Naive thymus-derived CD4-positive, alpha-beta T cell (primary cell): ENCODE measurements at regions of chr3 and their contacts with region 1.

Region 1: GRCh38 chr3:18531662-18532236 is 106.6 kb upstream of the SATB1 start:
- DNase-seq: no peak
- ATAC-seq: no peak
- H3K4me3 ChIP-seq: no peak overlapping the region
- H3K4me3 Mint-ChIP-seq: no peak overlapping the region
- H3K27ac ChIP-seq: no peak overlapping the region
- H3K27ac Mint-ChIP-seq: peak overlapping the region in 2 of 9 donors; percentile 22 to 37
- H3K4me1 ChIP-seq: no peaks in the 10 kb centered on the region
- H3K4me1 Mint-ChIP-seq: peaks cover 0 to 19% (median 8%) of the 10 kb centered on the region in 7 donors
- H3K27me3 ChIP-seq: no peaks in the 10 kb centered on the region
- H3K27me3 Mint-ChIP-seq: no peaks in the 10 kb centered on the region

Region 2: GRCh38 chr3:18489939-18490338 is 41.8 kb before region 1 on chr3:
- CTCF ChIA-PET with region 1: no interaction called
- POLR2A ChIA-PET with region 1: no interaction called
- intact Hi-C with region 1: loop called (anchors 10 kb)
- DNase-seq: peak in 7 of 9 donors; percentile 6 to 40 (median 16)
- ATAC-seq: peak; percentile 24
- H3K4me3 ChIP-seq: peak overlapping the region; percentile 3
- H3K4me3 Mint-ChIP-seq: peak overlapping the region in 7 of 10 donors; percentile 39 to 77 (median 64)
- H3K27ac ChIP-seq: no peak overlapping the region
- H3K27ac Mint-ChIP-seq: peak overlapping the region in 8 of 9 donors; percentile 12 to 92 (median 54)
- H3K4me1 ChIP-seq: peaks cover 10 to 11% of the 10 kb centered on the region in 2 donors
- H3K4me1 Mint-ChIP-seq: peaks cover 15 to 55% (median 32%) of the 10 kb centered on the region in 7 donors
- H3K27me3 ChIP-seq: no peaks in the 10 kb centered on the region
- H3K27me3 Mint-ChIP-seq: no peaks in the 10 kb centered on the region

Region 3: DNA sequence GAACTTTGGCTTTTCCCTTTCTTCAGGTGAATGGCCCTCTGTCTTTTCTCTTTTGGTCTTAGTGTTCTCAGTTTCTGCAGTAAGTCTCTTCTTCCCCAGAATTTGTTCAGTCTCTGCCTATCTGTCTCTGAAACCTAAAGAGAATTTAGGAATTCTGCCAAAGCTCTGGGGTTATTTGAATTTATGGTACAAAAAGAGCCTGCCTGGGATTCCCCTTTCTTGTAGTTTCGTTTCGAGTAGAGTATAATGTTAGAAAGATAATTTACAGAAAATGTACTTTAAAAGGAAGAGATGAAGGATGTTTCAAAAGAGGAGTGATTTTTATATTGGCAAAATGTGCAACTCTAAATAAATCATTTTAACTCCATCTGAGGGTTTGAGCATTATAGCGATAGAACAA is 140.8 kb after region 1 on chr3:
- CTCF ChIA-PET with region 1: no interaction called
- POLR2A ChIA-PET with region 1: no interaction called
- intact Hi-C with region 1: no loop called
- DNase-seq: no peak
- ATAC-seq: no peak
- H3K4me3 ChIP-seq: no peak overlapping the region
- H3K4me3 Mint-ChIP-seq: peak overlapping the region in 8 of 10 donors; percentile 11 to 63 (median 52)
- H3K27ac ChIP-seq: no peak overlapping the region
- H3K27ac Mint-ChIP-seq: peak overlapping the region in 5 of 9 donors; percentile 3 to 85 (median 49)
- H3K4me1 ChIP-seq: peaks cover 1 to 20% of the 10 kb centered on the region in 2 donors
- H3K4me1 Mint-ChIP-seq: peaks cover 23 to 69% (median 54%) of the 10 kb centered on the region in 7 donors
- H3K27me3 ChIP-seq: no peaks in the 10 kb centered on the region
- H3K27me3 Mint-ChIP-seq: no peaks in the 10 kb centered on the region